Kidney (tissue), 22 donors: ENCODE measurements at regions of chr18 and their contacts with region 1.

Region 1: GRCh38 chr18:55589625-55590291 is 1.8 kb upstream of the TCF4 start:
- DNase-seq: peak; percentile 97 to 99 (median 98)
- H3K4me3 ChIP-seq: peak overlapping the region; percentile 79 to 98 (median 87)
- H3K27ac ChIP-seq: peak overlapping the region; percentile 72 to 82
- H3K4me1 ChIP-seq: peaks cover 0 to 5% (median 3%) of the 10 kb centered on the region in 3 donors
- H3K27me3 ChIP-seq: no peaks in the 10 kb centered on the region
- CTCF ChIP-seq: no peak

Region 2: GRCh38 chr18:55415258-55415871 is 174.4 kb before region 1 on chr18:
- intact Hi-C with region 1: loop called (anchors 5 kb)
- DNase-seq: peak; percentile 79 to 90 (median 84)
- H3K4me3 ChIP-seq: no peak overlapping the region
- H3K27ac ChIP-seq: no peak overlapping the region
- H3K4me1 ChIP-seq: no peaks in the 10 kb centered on the region
- H3K27me3 ChIP-seq: no peaks in the 10 kb centered on the region
- CTCF ChIP-seq: peak; percentile 72

Region 3: GRCh38 chr18:55465313-55465712 is 124.4 kb before region 1 on chr18:
- intact Hi-C with region 1: no loop called
- DNase-seq: no peak
- H3K4me3 ChIP-seq: no peak overlapping the region
- H3K27ac ChIP-seq: no peak overlapping the region
- H3K4me1 ChIP-seq: no peaks in the 10 kb centered on the region
- H3K27me3 ChIP-seq: no peaks in the 10 kb centered on the region
- CTCF ChIP-seq: no peak

Region 4: GRCh38 chr18:55781481-55781957 is 191.8 kb after region 1 on chr18:
- intact Hi-C with region 1: no loop called
- DNase-seq: peak in 4 of 5 donors; percentile 63 to 86 (median 77)
- H3K4me3 ChIP-seq: no peak overlapping the region
- H3K27ac ChIP-seq: no peak overlapping the region
- H3K4me1 ChIP-seq: peaks cover 0 to 2% (median 0%) of the 10 kb centered on the region in 3 donors
- H3K27me3 ChIP-seq: peaks cover 5% of the 10 kb centered on the region
- CTCF ChIP-seq: peak; percentile 37